B cell (primary cell): ENCODE measurements at regions of chr12 and their contacts with region 1.

Region 1: GRCh38 chr12:47397664-47398281 is 308.1 kb downstream of the RPAP3 start:
- DNase-seq: peak; percentile 73
- ATAC-seq: peak; percentile 78
- H3K4me3 ChIP-seq: peak overlapping the region in 3 of 5 experiments; percentile 15 to 39 (median 30)
- H3K4me3 Mint-ChIP-seq: peak overlapping the region; percentile 63
- H3K27ac ChIP-seq: peak overlapping the region; percentile 49 to 75
- H3K27ac Mint-ChIP-seq: peak overlapping the region; percentile 91
- H3K4me1 ChIP-seq: peaks cover 27 to 48% of the 10 kb centered on the region in 2 donors
- H3K4me1 Mint-ChIP-seq: peaks cover 72% of the 10 kb centered on the region
- H3K27me3 ChIP-seq: no peaks in the 10 kb centered on the region
- H3K27me3 Mint-ChIP-seq: no peaks in the 10 kb centered on the region
- CTCF ChIP-seq: peak; percentile 70

Region 2: DNA sequence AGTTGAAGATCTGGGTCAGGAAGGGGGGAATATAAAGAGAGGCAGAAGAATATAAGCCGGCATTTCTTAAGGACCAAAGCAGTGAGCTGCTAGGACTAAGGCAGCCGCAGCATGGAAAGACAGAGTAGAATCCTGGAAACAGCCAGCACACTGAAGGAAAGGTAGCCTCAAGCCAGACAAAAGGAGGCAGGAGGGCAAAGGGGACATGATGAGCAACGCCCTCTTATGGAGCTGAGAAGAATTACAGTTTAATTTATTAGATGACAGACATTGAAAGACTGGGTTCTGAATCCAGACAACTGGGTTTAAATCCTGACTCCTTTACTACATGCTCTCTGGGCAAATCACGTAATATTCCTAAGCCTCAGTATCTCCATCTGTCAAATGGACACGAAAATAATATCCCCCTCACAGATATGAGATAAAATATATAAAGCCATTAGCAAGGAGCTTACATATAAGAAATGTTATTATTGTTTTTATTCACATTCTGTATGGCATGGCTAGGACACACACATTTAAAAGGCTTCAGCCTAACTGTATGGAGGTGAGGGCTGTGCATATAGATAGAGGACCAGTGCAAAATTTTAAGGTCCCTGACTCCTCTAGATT is 326.4 kb before region 1 on chr12:
- CTCF ChIA-PET with region 1: interaction called, 28 read pairs
- POLR2A ChIA-PET with region 1: no interaction called
- intact Hi-C with region 1: no loop called
- DNase-seq: peak; percentile 43
- ATAC-seq: no peak
- H3K4me3 ChIP-seq: no peak overlapping the region
- H3K4me3 Mint-ChIP-seq: no peak overlapping the region
- H3K27ac ChIP-seq: no peak overlapping the region
- H3K27ac Mint-ChIP-seq: no peak overlapping the region
- H3K4me1 ChIP-seq: no peaks in the 10 kb centered on the region
- H3K4me1 Mint-ChIP-seq: no peaks in the 10 kb centered on the region
- H3K27me3 ChIP-seq: no peaks in the 10 kb centered on the region
- H3K27me3 Mint-ChIP-seq: no peaks in the 10 kb centered on the region
- CTCF ChIP-seq: peak; percentile 63

Region 3: GRCh38 chr12:47190271-47190750 is 207.5 kb before region 1 on chr12:
- CTCF ChIA-PET with region 1: interaction called, 14 read pairs
- POLR2A ChIA-PET with region 1: no interaction called
- intact Hi-C with region 1: no loop called
- DNase-seq: no peak
- ATAC-seq: no peak
- H3K4me3 ChIP-seq: no peak overlapping the region
- H3K4me3 Mint-ChIP-seq: peak overlapping the region; percentile 30
- H3K27ac ChIP-seq: no peak overlapping the region
- H3K27ac Mint-ChIP-seq: peak overlapping the region; percentile 23
- H3K4me1 ChIP-seq: peaks cover 62 to 67% of the 10 kb centered on the region in 2 donors
- H3K4me1 Mint-ChIP-seq: peaks cover 64% of the 10 kb centered on the region
- H3K27me3 ChIP-seq: no peaks in the 10 kb centered on the region
- H3K27me3 Mint-ChIP-seq: no peaks in the 10 kb centered on the region
- CTCF ChIP-seq: no peak

Region 4: GRCh38 chr12:47270782-47271664 is 126.8 kb before region 1 on chr12:
- CTCF ChIA-PET with region 1: interaction called, 17 read pairs
- POLR2A ChIA-PET with region 1: interaction called, 4 read pairs
- intact Hi-C with region 1: no loop called
- DNase-seq: no peak
- ATAC-seq: no peak
- H3K4me3 ChIP-seq: no peak overlapping the region
- H3K4me3 Mint-ChIP-seq: peak overlapping the region; percentile 15
- H3K27ac ChIP-seq: no peak overlapping the region
- H3K27ac Mint-ChIP-seq: peak overlapping the region; percentile 70
- H3K4me1 ChIP-seq: peaks cover 62 to 67% of the 10 kb centered on the region in 2 donors
- H3K4me1 Mint-ChIP-seq: peaks cover 85% of the 10 kb centered on the region
- H3K27me3 ChIP-seq: no peaks in the 10 kb centered on the region
- H3K27me3 Mint-ChIP-seq: no peaks in the 10 kb centered on the region
- CTCF ChIP-seq: no peak

Region 5: GRCh38 chr12:47312808-47313426 is 84.9 kb before region 1 on chr12:
- CTCF ChIA-PET with region 1: interaction called, 66 read pairs
- POLR2A ChIA-PET with region 1: interaction called, 4 read pairs
- intact Hi-C with region 1: no loop called
- DNase-seq: peak; percentile 78
- ATAC-seq: peak; percentile 79
- H3K4me3 ChIP-seq: peak overlapping the region in 1 of 5 experiments; percentile 0
- H3K4me3 Mint-ChIP-seq: peak overlapping the region; percentile 17
- H3K27ac ChIP-seq: peak overlapping the region; percentile 40 to 61
- H3K27ac Mint-ChIP-seq: peak overlapping the region; percentile 68
- H3K4me1 ChIP-seq: peaks cover 51 to 65% of the 10 kb centered on the region in 2 donors
- H3K4me1 Mint-ChIP-seq: peaks cover 63% of the 10 kb centered on the region
- H3K27me3 ChIP-seq: no peaks in the 10 kb centered on the region
- H3K27me3 Mint-ChIP-seq: no peaks in the 10 kb centered on the region
- CTCF ChIP-seq: no peak

Region 6: GRCh38 chr12:47383942-47384341 is 13.8 kb before region 1 on chr12:
- CTCF ChIA-PET with region 1: interaction called, 49 read pairs
- POLR2A ChIA-PET with region 1: interaction called, 4 read pairs
- intact Hi-C with region 1: no loop called
- DNase-seq: no peak
- ATAC-seq: no peak
- H3K4me3 ChIP-seq: no peak overlapping the region
- H3K4me3 Mint-ChIP-seq: peak overlapping the region; percentile 30
- H3K27ac ChIP-seq: no peak overlapping the region
- H3K27ac Mint-ChIP-seq: peak overlapping the region; percentile 42
- H3K4me1 ChIP-seq: peaks cover 21 to 22% of the 10 kb centered on the region in 2 donors
- H3K4me1 Mint-ChIP-seq: peaks cover 50% of the 10 kb centered on the region
- H3K27me3 ChIP-seq: no peaks in the 10 kb centered on the region
- H3K27me3 Mint-ChIP-seq: no peaks in the 10 kb centered on the region
- CTCF ChIP-seq: no peak

Region 7: GRCh38 chr12:47419497-47419896 is 21.7 kb after region 1 on chr12:
- CTCF ChIA-PET with region 1: no interaction called
- POLR2A ChIA-PET with region 1: no interaction called
- intact Hi-C with region 1: no loop called
- DNase-seq: no peak
- ATAC-seq: no peak
- H3K4me3 ChIP-seq: no peak overlapping the region
- H3K4me3 Mint-ChIP-seq: no peak overlapping the region
- H3K27ac ChIP-seq: no peak overlapping the region
- H3K27ac Mint-ChIP-seq: no peak overlapping the region
- H3K4me1 ChIP-seq: no peaks in the 10 kb centered on the region
- H3K4me1 Mint-ChIP-seq: peaks cover 5% of the 10 kb centered on the region
- H3K27me3 ChIP-seq: peaks cover 0 to 3% (median 0%) of the 10 kb centered on the region in 4 experiments
- H3K27me3 Mint-ChIP-seq: peaks cover 6% of the 10 kb centered on the region
- CTCF ChIP-seq: no peak

Region 8: GRCh38 chr12:48021485-48022179 is 623.9 kb after region 1 on chr12:
- CTCF ChIA-PET with region 1: no interaction called
- POLR2A ChIA-PET with region 1: no interaction called
- intact Hi-C with region 1: no loop called
- DNase-seq: no peak
- ATAC-seq: no peak
- H3K4me3 ChIP-seq: no peak overlapping the region
- H3K4me3 Mint-ChIP-seq: no peak overlapping the region
- H3K27ac ChIP-seq: no peak overlapping the region
- H3K27ac Mint-ChIP-seq: no peak overlapping the region
- H3K4me1 ChIP-seq: no peaks in the 10 kb centered on the region
- H3K4me1 Mint-ChIP-seq: no peaks in the 10 kb centered on the region
- H3K27me3 ChIP-seq: peaks cover 0 to 12% (median under 1%) of the 10 kb centered on the region in 4 experiments
- H3K27me3 Mint-ChIP-seq: peaks cover 30% of the 10 kb centered on the region
- CTCF ChIP-seq: no peak